Activated B cell treated with CpG ODN at 0.5 μM for 24 hours (primary cell): ENCODE measurements at regions of chr9 and their contacts with region 1.

Region 1: GRCh38 chr9:90801583-90802289 is at the start of gene SYK:
- DNase-seq: peak; percentile 72
- ATAC-seq: peak; percentile 77
- H3K4me3 Mint-ChIP-seq: peak within 1 kb of the TSS; percentile 94
- H3K27ac Mint-ChIP-seq: peak within 1 kb of the TSS; percentile 94
- H3K4me1 Mint-ChIP-seq: peaks cover 74% of the 10 kb centered on the region
- H3K27me3 Mint-ChIP-seq: no peaks in the 10 kb centered on the region
- CTCF ChIP-seq: no peak
- total RNA-seq, gene SYK: 222 and 237 TPM in 2 replicates

Region 2: DNA sequence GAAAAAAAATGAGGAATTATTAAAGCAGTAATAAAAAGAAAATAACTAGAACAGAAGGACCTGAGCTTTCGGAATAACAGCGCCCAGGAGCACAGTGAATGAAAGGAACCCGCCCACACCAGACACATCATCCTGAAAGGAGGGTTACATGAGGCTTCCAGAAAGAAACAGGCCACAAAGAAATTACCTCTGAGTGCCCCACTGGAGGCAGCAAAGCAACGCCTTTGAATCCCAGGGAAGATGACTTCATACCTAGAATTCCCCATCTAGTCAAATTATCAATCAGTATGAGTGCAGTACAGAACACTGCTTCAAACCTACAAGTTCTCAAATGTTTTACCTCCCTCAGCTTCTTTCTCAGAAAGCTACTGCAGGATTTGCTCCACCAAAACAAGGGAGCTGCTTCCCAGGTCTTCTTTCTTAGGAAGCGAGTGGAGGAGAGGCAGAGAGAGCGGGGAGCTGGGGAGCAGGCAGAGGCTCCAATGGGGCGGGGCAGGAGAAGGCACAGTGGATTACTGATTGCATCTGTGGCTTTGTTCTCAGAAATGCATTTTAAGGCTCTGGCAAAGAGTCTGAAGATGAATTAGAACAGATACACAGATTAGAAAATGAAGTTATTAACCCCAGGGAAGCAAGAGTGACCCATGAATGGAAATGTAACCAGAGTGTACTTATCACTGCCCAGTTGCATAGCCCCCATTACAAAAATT is 1390.9 kb before region 1 on chr9:
- CTCF ChIA-PET with region 1: no interaction called
- POLR2A ChIA-PET with region 1: no interaction called
- intact Hi-C with region 1: loop called (anchors 10 kb)
- DNase-seq: no peak
- ATAC-seq: peak; percentile 20
- H3K4me3 Mint-ChIP-seq: no peak overlapping the region
- H3K27ac Mint-ChIP-seq: peak overlapping the region; percentile 35
- H3K4me1 Mint-ChIP-seq: peaks cover 58% of the 10 kb centered on the region
- H3K27me3 Mint-ChIP-seq: no peaks in the 10 kb centered on the region
- CTCF ChIP-seq: no peak

Region 3: GRCh38 chr9:90787771-90788460 is 13.8 kb before region 1 on chr9:
- CTCF ChIA-PET with region 1: interaction called, 4 read pairs
- POLR2A ChIA-PET with region 1: interaction called, 14 read pairs
- intact Hi-C with region 1: loop called (anchors 1 kb)
- DNase-seq: no peak
- ATAC-seq: peak; percentile 53
- H3K4me3 Mint-ChIP-seq: no peak overlapping the region
- H3K27ac Mint-ChIP-seq: peak overlapping the region; percentile 66
- H3K4me1 Mint-ChIP-seq: peaks cover 42% of the 10 kb centered on the region
- H3K27me3 Mint-ChIP-seq: no peaks in the 10 kb centered on the region
- CTCF ChIP-seq: no peak

Region 4: GRCh38 chr9:90838100-90838499 is 36.4 kb after region 1 on chr9:
- CTCF ChIA-PET with region 1: interaction called, 3 read pairs
- POLR2A ChIA-PET with region 1: interaction called, 102 read pairs
- intact Hi-C with region 1: no loop called
- DNase-seq: no peak
- ATAC-seq: no peak
- H3K4me3 Mint-ChIP-seq: peak overlapping the region; percentile 36
- H3K27ac Mint-ChIP-seq: no peak overlapping the region
- H3K4me1 Mint-ChIP-seq: peaks cover 69% of the 10 kb centered on the region
- H3K27me3 Mint-ChIP-seq: no peaks in the 10 kb centered on the region
- CTCF ChIP-seq: no peak